Aorta (tissue), 5 donors: ENCODE measurements at regions of chrX and their contacts with region 1.

Region 1: DNA sequence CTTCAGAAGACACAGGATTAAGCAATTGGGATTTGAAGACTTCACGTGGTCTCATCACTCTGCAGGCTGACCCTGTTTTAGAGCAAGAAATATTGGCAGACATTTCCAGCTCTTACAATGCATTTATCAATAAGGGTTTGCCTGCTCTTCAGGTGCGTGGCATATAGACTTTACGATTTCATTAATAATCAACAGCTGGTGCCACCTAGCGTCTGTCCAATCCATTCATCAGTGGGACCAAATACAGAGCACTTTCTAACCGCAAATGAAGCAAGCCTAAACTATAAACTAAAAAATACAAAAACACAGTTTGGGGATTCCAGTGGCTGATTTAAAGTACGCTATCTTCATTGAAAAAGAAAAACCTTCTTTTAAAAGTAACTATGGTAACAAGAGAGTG is 125.4 kb upstream of the DMD start:
- DNase-seq: no peak
- ATAC-seq: no peak
- H3K4me3 ChIP-seq: peak overlapping the region in 1 of 2 donors; percentile 34
- H3K27ac ChIP-seq: no peak overlapping the region
- H3K4me1 ChIP-seq: no peaks in the 10 kb centered on the region
- H3K27me3 ChIP-seq: no peaks in the 10 kb centered on the region

Region 2: GRCh38 chrX:32530802-32531403 is 805.9 kb before region 1 on chrX:
- intact Hi-C with region 1: loop called in 1 of 2 experiments (anchors 10 kb)
- DNase-seq: no peak
- ATAC-seq: no peak
- H3K4me3 ChIP-seq: no peak overlapping the region
- H3K27ac ChIP-seq: no peak overlapping the region
- H3K4me1 ChIP-seq: no peaks in the 10 kb centered on the region
- H3K27me3 ChIP-seq: no peaks in the 10 kb centered on the region

Region 3: GRCh38 chrX:33171041-33171440 is 165.7 kb before region 1 on chrX:
- intact Hi-C with region 1: no loop called
- DNase-seq: no peak
- ATAC-seq: no peak
- H3K4me3 ChIP-seq: no peak overlapping the region
- H3K27ac ChIP-seq: no peak overlapping the region
- H3K4me1 ChIP-seq: no peaks in the 10 kb centered on the region
- H3K27me3 ChIP-seq: no peaks in the 10 kb centered on the region

Region 4: DNA sequence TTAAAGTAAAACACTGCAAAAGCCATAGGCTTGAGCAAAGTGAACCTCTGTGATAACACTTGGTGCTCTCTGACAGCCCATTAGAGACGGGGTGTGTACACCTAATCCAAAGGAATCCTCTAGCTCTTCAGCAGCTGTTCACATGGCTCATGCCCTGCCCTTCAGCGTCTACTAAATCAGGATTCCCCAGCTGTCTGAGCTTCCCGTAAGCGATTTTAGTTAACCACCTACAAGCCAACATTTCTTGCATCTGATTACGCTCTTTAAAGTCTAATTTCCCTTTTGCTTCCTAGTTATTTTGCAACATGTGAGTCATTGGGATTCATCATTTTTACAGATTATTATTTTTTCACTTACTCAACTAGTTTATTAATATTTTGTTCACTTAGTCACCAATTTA is 131.9 kb before region 1 on chrX:
- intact Hi-C with region 1: loop called (anchors 10 kb)
- DNase-seq: no peak
- ATAC-seq: peak; percentile 48
- H3K4me3 ChIP-seq: peak overlapping the region; percentile 31 to 48
- H3K27ac ChIP-seq: peak overlapping the region in 1 of 2 donors; percentile 51
- H3K4me1 ChIP-seq: peaks cover 0 to 3% of the 10 kb centered on the region in 2 donors
- H3K27me3 ChIP-seq: no peaks in the 10 kb centered on the region

Region 5: DNA sequence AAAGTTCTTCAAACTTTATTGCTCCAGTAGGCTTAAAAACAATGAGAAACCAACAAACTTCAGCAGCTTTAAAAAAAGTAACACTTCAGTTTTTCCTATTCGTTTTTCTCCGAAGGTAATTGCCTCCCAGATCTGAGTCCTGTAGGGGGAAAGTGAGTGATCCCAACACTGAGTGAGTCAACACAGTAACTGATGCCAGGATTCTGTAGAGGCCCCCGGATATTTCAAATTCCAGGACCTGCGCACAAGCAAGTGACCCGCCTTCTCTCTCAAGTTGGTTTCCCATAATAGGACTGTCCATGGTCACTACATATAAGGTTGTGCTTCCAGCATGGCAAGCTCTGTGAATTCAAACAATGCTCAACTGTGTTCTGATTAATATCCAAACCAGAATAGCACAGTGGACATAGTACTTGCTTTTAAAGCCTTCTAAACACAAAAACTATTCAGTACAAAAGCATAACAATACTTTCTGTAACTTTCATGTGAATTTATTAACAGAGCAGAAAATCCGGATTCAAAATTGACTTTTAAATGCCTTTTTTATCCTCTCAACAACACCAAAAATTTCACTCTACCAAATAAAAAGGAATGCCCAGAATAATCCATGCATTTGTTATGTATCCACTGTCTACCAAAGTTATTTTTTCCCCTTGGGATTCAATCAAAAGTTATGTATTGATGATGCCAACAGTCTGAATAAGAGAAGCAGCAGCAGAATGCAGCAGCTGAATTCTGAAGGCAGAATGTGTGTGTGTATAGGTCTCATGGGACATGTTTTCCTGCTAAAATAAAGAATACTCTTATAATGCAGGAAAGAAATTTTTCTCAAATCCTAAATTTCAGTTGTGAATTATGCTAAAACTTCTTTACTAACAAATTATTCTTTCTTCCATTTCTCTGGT is 125.2 kb before region 1 on chrX and contains the start of gene DMD:
- intact Hi-C with region 1: loop called (anchors 10 kb)
- DNase-seq: peak; percentile 53 to 76
- ATAC-seq: peak; percentile 92
- H3K4me3 ChIP-seq: peak within 1 kb of the TSS; percentile 58 to 64
- H3K27ac ChIP-seq: no peak within 1 kb of the TSS
- H3K4me1 ChIP-seq: no peaks in the 10 kb centered on the region
- H3K27me3 ChIP-seq: no peaks in the 10 kb centered on the region
- total RNA-seq, gene DMD: 175 to 260 TPM

Region 6: GRCh38 chrX:33416273-33416805 is 79.6 kb after region 1 on chrX:
- intact Hi-C with region 1: no loop called
- DNase-seq: no peak
- ATAC-seq: no peak
- H3K4me3 ChIP-seq: no peak overlapping the region
- H3K27ac ChIP-seq: no peak overlapping the region
- H3K4me1 ChIP-seq: no peaks in the 10 kb centered on the region
- H3K27me3 ChIP-seq: no peaks in the 10 kb centered on the region